A673 (cell line): ENCODE measurements at regions of chrX and their contacts with region 1.

Region 1: GRCh38 chrX:129637217-129638109 is 17.3 kb downstream of the APLN start:
- DNase-seq: peak; percentile 75
- H3K4me3 ChIP-seq: no peak overlapping the region
- H3K27ac ChIP-seq: no peak overlapping the region
- H3K4me1 ChIP-seq: no peaks in the 10 kb centered on the region
- H3K27me3 ChIP-seq: no peaks in the 10 kb centered on the region
- CTCF ChIP-seq: peak; percentile 96

Region 2: GRCh38 chrX:129726307-129727111 is 89.0 kb after region 1 on chrX:
- CTCF ChIA-PET with region 1: interaction called, 6 read pairs
- POLR2A ChIA-PET with region 1: no interaction called
- intact Hi-C with region 1: loop called (anchors 1 kb)
- DNase-seq: peak; percentile 59
- H3K4me3 ChIP-seq: no peak overlapping the region
- H3K27ac ChIP-seq: no peak overlapping the region
- H3K4me1 ChIP-seq: no peaks in the 10 kb centered on the region
- H3K27me3 ChIP-seq: no peaks in the 10 kb centered on the region
- CTCF ChIP-seq: peak; percentile 70

Region 3: DNA sequence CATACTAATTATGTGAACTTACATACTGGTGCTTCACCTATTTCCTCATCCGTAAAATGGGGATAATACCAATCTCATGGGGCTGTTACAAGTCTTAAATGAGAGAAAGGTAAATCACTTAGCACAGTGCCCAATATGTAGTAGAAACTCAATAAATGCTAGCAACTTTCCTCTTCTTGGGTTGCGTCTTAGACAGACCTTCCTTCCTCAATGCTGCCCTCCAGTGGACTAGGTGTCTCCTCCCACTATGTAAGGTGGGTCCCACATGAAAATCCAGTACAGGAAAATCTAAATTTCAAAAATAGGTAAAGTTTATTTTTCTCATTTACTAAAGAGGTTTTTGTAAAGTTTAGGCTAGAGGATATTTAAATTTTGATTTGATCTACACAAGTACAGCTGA is 185.7 kb after region 1 on chrX:
- CTCF ChIA-PET with region 1: no interaction called
- POLR2A ChIA-PET with region 1: no interaction called
- intact Hi-C with region 1: loop called (anchors 2 kb)
- DNase-seq: peak; percentile 66
- H3K4me3 ChIP-seq: no peak overlapping the region
- H3K27ac ChIP-seq: no peak overlapping the region
- H3K4me1 ChIP-seq: no peaks in the 10 kb centered on the region
- H3K27me3 ChIP-seq: no peaks in the 10 kb centered on the region
- CTCF ChIP-seq: peak; percentile 69

Region 4: DNA sequence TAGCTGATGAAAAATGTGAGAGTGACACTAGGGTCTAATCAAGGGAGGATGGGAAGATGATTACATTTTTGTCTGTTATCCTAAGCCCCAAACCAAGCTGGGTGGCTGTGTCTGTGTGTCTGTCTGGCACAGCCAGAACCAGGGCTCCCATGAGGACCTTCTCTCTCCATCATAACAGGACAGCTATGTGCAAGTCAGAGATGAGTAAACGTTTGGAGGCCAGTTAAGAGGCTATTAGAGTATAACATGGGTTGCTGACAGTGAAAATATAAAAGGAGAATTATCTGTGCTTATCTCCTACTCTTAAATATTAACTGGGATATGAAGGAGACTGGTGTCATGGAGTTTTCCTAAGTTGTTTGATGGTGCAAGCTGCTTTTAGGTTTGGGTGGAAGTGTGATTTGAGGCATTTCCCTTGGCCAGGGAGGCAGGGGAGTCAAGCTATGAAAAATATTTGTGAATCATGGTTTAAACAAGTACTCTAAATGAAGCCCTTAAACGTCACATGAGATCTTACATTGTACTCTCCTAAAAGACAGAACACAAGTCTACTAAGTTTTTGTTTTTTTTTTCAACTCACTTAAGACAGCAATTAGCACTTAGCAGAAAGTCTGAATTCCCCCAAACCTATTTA is 1109.4 kb after region 1 on chrX:
- CTCF ChIA-PET with region 1: no interaction called
- POLR2A ChIA-PET with region 1: no interaction called
- intact Hi-C with region 1: no loop called
- DNase-seq: no peak
- H3K4me3 ChIP-seq: no peak overlapping the region
- H3K27ac ChIP-seq: no peak overlapping the region
- H3K4me1 ChIP-seq: no peaks in the 10 kb centered on the region
- H3K27me3 ChIP-seq: no peaks in the 10 kb centered on the region
- CTCF ChIP-seq: no peak